GM10248 (cell line): ENCODE measurements at regions of chr10 and their contacts with region 1.

Region 1: GRCh38 chr10:52488606-52489485 is 174.8 kb downstream of the DKK1 start:
- DNase-seq: peak; percentile 15
- CTCF ChIP-seq: peak; percentile 28

Region 2: DNA sequence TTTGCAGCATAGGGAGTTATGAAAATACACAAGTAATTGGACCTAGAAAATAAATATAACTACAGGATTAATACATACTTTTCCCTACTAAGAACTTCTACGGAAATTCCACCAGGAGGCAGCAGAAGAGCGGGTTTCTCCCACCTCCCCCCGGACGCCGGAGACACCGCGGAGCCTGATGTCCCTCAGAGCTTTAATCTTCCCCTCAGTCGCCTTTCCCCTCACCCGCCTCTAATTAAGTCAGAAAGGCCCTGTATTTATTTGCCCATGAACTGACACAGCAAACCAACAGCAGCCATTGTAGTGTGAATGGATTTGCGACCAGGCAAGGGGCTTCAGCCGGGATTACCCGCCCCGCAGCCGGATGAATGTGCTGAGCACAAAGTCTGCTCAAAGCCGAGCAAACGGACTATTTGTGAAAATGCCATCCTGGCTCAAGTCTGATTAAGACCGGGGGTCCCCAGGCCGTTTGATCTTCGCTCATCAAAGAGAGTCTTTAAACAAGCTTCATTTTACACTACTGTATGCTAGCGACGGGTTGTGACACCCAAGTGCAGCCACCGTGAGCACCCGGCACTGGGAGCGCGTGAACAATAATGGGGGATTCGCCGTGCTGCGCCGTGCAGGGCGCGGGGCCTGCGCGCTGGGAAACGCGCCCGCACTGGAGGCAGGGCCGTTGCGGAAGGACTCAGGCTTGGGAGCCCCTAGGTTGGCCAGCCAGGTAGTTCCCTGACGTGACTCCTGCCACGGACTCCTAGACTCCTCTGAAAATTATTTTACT is 180.4 kb before region 1 on chr10:
- CTCF ChIA-PET with region 1: interaction called, 36 read pairs
- POLR2A ChIA-PET with region 1: no interaction called
- DNase-seq: peak; percentile 57
- CTCF ChIP-seq: peak; percentile 42